HEK293T (cell line): ENCODE measurements at regions of chr10 and their contacts with region 1.

Region 1: DNA sequence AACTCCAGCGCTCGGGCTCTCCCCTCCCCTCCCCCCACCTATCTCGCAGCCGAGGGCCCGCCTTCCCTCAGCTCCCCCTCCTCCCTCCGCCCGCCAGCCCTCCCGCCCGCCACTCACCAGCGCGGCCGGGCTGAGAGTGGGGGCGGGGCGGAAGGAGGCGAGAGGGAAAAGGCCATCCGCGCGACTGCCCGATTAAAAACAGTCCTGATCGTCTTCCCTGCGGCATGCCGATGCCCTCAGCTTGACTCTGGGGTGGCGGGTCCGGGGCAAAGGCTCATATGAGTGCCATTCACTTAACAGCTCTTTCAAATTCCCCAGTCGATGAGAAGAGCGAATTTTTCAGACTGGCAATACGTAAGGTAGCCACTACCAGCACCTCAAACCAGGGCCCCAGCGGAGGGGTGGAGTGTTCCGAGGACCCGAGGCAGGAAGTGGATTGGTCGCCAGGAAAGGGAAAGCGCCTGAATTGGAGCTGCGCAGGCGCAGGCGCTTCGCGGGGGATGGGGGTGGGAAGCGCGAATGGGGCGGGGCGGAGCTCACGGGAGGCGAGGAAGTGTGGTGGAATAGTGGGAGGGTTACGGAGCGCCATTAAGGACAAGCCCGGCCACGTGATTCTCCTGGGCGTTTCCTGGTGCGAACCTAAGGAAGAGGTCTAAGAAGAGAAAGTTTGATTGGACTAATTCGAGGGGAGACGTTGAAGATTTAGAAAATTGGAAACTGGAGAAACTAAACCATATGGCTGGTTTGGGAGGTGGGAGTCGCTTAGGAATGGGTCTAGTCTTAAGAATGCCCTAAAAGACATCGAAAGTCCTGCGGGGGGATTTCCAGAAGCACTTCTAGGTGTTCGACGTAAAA is at the start of gene UPF2:
- DNase-seq: peak; percentile 98

Region 2: GRCh38 chr10:12068449-12069269 is 25.6 kb after region 1 on chr10 and contains the start of gene DHTKD1:
- CTCF ChIA-PET with region 1: no interaction called
- POLR2A ChIA-PET with region 1: interaction called, 22 read pairs
- DNase-seq: peak; percentile 98